Sigmoid colon (tissue), 7 donors: ENCODE measurements at regions of chr13 and their contacts with region 1.

Region 1: GRCh38 chr13:41352935-41353840 is 42.1 kb downstream of the NAA16 start:
- DNase-seq: no peak
- H3K4me3 ChIP-seq: no peak overlapping the region
- H3K27ac ChIP-seq: no peak overlapping the region
- H3K4me1 ChIP-seq: peaks cover 0 to 10% (median 3%) of the 10 kb centered on the region in 4 donors
- H3K27me3 ChIP-seq: no peaks in the 10 kb centered on the region
- CTCF ChIP-seq: peak in 3 of 4 experiments; percentile 81 to 83 (median 82)
- EP300 ChIP-seq: no peak
- POLR2A ChIP-seq: no peak

Region 2: GRCh38 chr13:41652727-41653361 is 299.7 kb after region 1 on chr13:
- intact Hi-C with region 1: loop called (anchors 2 kb)
- DNase-seq: no peak
- H3K4me3 ChIP-seq: no peak overlapping the region
- H3K27ac ChIP-seq: peak overlapping the region in 2 of 4 donors; percentile 2 to 6
- H3K4me1 ChIP-seq: peaks cover 0 to 32% (median 19%) of the 10 kb centered on the region in 4 donors
- H3K27me3 ChIP-seq: no peaks in the 10 kb centered on the region
- CTCF ChIP-seq: peak; percentile 32 to 61 (median 48)
- EP300 ChIP-seq: no peak
- POLR2A ChIP-seq: no peak